Esophagus squamous epithelium (tissue), 5 donors: ENCODE measurements at regions of chr12 and their contacts with region 1.

Region 1: GRCh38 chr12:80269803-80270552 is 170.6 kb downstream of the OTOGL start:
- DNase-seq: no peak
- H3K4me3 ChIP-seq: no peak overlapping the region
- H3K27ac ChIP-seq: no peak overlapping the region
- H3K4me1 ChIP-seq: peaks cover 0 to 12% (median 7%) of the 10 kb centered on the region in 3 donors
- H3K27me3 ChIP-seq: no peaks in the 10 kb centered on the region
- CTCF ChIP-seq: peak in 5 of 6 experiments; percentile 22 to 57 (median 41)
- POLR2A ChIP-seq: no peak

Region 2: DNA sequence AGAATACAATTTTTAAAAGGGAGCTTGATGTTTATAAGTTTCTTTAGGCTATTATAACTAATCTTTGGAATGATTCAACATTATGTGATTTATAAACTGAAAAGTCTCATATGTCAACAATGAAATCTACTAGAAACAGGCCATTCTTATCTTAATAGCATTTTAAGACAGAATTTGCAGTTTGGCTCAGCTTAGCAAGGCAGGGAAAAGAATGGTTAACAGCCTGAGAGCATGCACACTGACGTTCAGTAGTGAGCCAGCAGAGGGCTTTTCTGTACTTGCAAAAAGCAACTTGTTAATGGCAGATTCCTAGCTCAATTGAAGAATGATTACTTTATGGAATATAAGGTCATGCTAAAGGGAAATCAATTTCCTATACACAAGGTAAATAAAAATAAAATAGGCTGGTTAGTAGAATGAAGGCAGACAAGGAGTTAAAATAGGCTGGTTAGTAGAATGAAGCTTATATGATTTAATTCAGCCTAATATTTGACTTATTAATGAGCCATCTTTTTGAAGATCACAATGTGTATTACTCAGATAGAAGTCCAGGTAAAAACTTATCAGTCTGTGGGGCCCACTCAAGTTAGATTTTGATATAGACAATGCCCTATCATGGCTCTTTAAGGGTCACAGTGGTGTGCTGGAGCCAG is 74.8 kb before region 1 on chr12:
- intact Hi-C with region 1: loop called (anchors 10 kb)
- DNase-seq: no peak
- H3K4me3 ChIP-seq: no peak overlapping the region
- H3K27ac ChIP-seq: no peak overlapping the region
- H3K4me1 ChIP-seq: no peaks in the 10 kb centered on the region
- H3K27me3 ChIP-seq: no peaks in the 10 kb centered on the region
- CTCF ChIP-seq: peak in 5 of 6 experiments; percentile 28 to 64 (median 43)
- POLR2A ChIP-seq: no peak